Activated naive CD8-positive, alpha-beta T cell treated with anti-CD3 and anti-CD28 coated beads, Interleukin-2, amount 10 ng/mL, durations not matched to agents 7 days and 5 days (primary cell): ENCODE measurements at regions of chr14 and their contacts with region 1.

Region 1: GRCh38 chr14:61334197-61334701 is 12.9 kb downstream of the PRKCH start:
- DNase-seq: no peak
- ATAC-seq: peak; percentile 15
- H3K4me3 Mint-ChIP-seq: peak overlapping the region; percentile 78
- H3K27ac Mint-ChIP-seq: peak overlapping the region; percentile 93
- H3K4me1 Mint-ChIP-seq: peaks cover 77% of the 10 kb centered on the region
- H3K27me3 Mint-ChIP-seq: no peaks in the 10 kb centered on the region

Region 2: GRCh38 chr14:61103481-61104339 is 230.5 kb before region 1 on chr14:
- POLR2A ChIA-PET with region 1: no interaction called
- DNase-seq: no peak
- ATAC-seq: no peak
- H3K4me3 Mint-ChIP-seq: no peak overlapping the region
- H3K27ac Mint-ChIP-seq: no peak overlapping the region
- H3K4me1 Mint-ChIP-seq: peaks cover 7% of the 10 kb centered on the region
- H3K27me3 Mint-ChIP-seq: no peaks in the 10 kb centered on the region

Region 3: DNA sequence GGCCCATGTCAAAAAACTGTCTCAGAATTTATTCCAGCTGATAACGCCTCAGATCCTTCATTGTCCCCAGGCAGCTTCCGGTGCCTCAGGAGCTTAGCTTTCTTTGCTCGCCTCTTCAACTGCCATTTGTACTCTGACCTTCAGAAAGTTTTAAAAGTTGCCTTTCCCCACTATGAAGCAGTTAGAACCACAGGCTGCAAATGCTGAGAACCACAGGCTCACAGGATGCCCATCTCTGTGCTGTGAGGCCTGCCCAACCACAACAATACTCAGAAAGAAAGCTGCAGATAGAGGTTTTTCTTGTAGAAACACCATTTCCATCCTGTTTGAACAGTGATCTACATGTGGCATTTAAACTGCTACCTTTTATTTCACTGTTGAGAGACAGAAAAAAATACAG is 118.2 kb after region 1 on chr14:
- POLR2A ChIA-PET with region 1: interaction called, 30 read pairs
- DNase-seq: peak; percentile 59
- ATAC-seq: peak; percentile 83
- H3K4me3 Mint-ChIP-seq: peak overlapping the region; percentile 79
- H3K27ac Mint-ChIP-seq: peak overlapping the region; percentile 92
- H3K4me1 Mint-ChIP-seq: peaks cover 92% of the 10 kb centered on the region
- H3K27me3 Mint-ChIP-seq: no peaks in the 10 kb centered on the region